Posterior vena cava (tissue), 2 donors: ENCODE measurements at regions of chr11 and their contacts with region 1.

Region 1: DNA sequence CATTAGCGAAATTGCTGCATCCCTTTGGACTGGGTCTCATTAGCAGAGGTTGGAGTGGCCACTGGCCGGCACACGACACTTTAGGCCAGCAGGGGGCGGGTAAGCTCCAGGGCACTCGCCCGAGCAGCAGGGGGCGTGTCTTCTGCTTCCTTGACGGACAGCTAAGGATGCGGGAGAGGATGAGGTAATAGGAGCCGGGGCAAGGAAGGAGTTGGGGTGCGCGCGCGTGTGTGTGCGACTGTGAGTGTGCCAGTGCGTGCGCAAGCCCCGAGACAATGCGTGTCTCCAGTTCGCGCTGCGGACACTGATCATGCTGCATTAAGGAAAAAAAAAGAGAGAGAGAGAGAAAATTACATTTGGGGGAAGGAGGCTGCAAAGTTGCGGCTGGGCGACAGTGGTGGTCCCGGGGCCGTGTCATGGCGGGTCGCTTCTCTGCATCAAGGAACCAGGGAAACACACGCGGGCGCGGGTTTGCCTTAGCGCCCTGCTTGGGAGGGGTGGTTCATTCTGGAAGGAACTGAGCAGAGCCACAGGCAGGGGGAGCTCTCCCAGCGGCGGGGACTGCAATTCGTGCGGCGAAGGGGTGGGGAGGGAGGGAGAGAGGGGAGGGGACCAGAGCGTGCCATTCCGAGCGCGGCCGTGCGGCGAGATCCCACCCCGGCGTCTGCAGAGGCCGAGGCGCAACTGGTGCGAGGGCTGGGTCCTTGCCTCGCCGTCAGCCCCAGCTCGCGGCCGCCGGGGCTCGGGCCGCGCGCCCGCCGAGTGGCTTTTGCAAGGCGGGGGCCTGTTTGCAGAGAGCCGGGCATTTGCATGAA is at the start of gene DTX4:
- DNase-seq: peak; percentile 97
- total RNA-seq, gene DTX4: 1.9 to 2.0 TPM

Region 2: DNA sequence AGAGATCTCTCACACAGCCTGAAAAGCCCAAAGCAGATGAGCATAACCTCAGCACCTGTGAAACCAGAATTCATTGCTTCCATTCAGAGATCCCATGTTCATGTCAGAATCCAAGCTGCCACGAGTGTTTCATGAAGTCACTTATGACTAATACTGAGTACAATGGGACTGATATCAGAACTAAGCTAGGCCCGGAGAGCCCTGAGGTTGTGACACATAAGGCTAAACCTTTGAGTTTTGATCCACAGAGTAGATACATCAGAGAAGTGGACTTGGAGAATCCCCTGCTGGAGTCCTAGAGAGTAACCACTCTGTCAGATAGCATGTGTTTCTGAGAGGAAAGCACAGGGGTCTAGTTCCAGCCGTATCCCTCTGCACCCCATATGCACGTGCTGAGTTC is 233.3 kb before region 1 on chr11:
- intact Hi-C with region 1: no loop called
- DNase-seq: no peak

Region 3: DNA sequence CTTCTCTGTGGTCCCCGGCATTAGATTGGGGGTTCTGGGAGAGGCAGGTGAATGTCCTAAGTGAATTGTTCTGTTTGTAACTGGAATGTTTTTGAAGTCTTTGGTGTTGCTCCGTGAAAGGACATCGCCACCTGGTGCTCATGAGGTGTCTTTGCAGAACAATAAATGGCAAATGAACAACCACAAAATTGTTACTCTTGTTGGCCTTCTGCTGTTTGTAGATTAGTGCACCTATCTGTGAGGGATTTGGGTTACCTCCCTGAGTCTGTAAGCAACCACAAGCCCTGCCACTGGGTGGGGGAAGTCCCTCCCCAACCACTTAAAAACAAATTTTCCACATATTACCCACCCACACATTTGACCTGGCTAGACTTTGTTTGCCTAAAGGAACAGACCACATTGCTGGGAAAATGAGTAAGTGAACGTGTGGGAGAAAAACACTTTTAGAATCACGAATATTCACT is 36.3 kb after region 1 on chr11:
- intact Hi-C with region 1: loop called (anchors 2 to 5 kb)
- DNase-seq: no peak

Region 4: DNA sequence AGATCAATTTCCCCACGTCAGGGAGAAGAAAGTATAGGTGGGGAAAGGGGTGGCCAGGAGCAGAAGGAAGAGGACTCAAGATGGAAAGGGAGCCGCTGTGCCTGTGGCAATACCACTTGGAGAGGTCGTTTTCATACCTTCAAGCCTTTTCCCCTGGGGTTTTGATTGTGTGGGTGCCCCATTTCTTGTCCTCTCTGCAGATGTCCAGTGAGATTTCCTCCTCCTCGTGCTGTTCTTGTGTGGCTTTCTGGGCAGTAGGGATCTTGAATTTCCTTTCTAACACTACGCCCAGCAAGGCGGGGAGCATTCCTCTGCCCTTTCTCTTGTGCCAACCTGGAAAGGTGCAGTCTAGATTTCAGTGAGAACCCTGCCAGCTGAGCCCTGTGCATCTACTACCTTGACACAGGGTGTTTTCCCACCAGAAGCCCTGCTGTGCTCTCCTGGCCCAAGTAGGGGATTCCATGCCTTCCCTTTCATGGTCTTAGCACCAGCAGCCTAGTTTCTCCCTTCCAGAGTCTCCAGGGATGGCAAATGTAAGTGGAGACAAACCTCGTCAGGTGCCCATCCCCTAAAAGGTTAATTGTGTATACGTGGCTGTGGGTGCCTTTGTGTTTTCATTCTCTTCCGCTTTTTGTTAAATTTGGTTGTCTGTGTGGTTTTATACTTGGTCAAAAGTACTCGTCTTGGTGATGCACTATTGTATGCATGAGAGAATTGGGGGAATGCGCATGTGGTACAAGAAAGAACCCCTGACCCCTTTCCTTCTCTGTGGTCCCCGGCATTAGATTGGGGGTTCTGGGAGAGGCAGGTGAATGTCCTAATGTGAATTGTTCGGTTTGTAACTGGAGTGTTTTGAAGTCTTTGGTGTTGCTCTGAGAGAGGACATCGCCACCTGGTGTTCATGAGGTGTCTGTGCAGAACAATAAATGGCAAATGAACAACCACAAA is 112.4 kb after region 1 on chr11:
- intact Hi-C with region 1: loop called (anchors 2 to 10 kb)
- DNase-seq: no peak